Activated B cell treated with CpG ODN at 0.5 μM for 24 hours (primary cell): ENCODE measurements at regions of chr17 and their contacts with region 1.

Region 1: DNA sequence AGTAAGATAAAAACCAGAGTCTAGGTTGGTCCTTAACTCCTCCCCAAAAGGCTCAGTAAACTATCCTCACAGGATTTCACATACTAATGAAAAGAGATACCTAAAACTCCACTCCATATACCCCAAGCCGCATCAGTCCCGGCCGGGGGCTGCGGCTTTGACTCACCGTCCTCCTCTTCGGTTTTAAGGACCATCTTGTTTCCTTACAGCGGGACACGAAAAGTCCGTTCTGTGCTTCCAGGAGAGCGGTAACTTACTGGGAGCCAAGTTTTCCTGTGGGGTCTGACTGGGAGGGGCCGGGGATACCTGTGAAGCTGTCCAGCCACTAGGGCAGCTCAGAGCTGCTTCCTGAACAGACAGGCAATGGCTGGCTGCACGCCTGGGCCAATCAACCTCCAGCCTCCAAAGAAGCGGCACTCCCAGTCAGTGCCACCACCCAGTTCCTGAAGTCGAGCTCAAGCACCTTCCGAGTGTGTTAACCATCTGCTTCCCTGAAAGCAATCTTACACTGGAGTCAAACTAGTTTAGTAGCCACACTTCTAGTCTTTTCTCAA is 45.5 kb downstream of the CYTH1 start:
- DNase-seq: peak; percentile 57
- ATAC-seq: peak; percentile 51
- H3K4me3 Mint-ChIP-seq: peak overlapping the region; percentile 92
- H3K27ac Mint-ChIP-seq: peak overlapping the region; percentile 90
- H3K4me1 Mint-ChIP-seq: peaks cover 81% of the 10 kb centered on the region
- H3K27me3 Mint-ChIP-seq: no peaks in the 10 kb centered on the region
- CTCF ChIP-seq: no peak

Region 2: GRCh38 chr17:78716814-78717393 is 19.7 kb before region 1 on chr17:
- CTCF ChIA-PET with region 1: interaction called, 52 read pairs
- POLR2A ChIA-PET with region 1: interaction called, 396 read pairs
- intact Hi-C with region 1: loop called (anchors 1 kb)
- DNase-seq: no peak
- ATAC-seq: peak; percentile 28
- H3K4me3 Mint-ChIP-seq: peak overlapping the region; percentile 65
- H3K27ac Mint-ChIP-seq: peak overlapping the region; percentile 78
- H3K4me1 Mint-ChIP-seq: peaks cover 95% of the 10 kb centered on the region
- H3K27me3 Mint-ChIP-seq: no peaks in the 10 kb centered on the region
- CTCF ChIP-seq: no peak

Region 3: DNA sequence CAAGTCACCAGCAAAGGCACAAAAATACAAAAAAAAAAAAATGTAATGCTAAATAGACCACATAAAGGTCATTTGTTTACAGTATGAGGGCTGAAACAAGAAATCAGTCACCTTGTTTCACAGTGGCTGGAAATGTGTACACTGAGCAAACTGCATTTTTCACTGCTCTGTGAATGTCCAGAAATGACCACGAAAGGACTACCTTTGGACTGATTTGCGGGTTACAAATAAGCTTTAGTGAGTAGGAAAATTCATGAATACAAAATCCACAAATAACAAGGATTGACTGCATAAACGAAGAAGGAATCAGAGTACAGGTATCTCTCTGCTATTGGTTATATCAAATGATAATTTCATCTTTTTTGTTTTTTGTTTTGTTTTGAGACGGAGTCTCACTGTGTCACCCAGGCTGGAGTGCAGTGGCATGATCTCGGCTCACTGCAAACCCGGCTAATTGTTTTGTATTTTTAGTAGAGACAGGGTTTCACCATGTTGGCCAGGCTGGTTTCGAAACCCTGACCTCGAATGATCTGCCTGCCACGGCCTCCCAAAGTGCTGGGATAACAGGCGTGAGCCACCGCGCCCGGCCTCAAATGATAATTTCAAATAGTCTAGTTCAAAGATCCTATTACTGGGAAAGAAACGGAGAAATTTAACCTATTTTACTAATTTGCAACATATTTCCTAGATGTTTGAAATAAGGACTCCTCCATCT is 15.0 kb after region 1 on chr17:
- CTCF ChIA-PET with region 1: interaction called, 11 read pairs
- POLR2A ChIA-PET with region 1: interaction called, 72 read pairs
- intact Hi-C with region 1: loop called (anchors 2 kb)
- DNase-seq: no peak
- ATAC-seq: no peak
- H3K4me3 Mint-ChIP-seq: no peak overlapping the region
- H3K27ac Mint-ChIP-seq: peak overlapping the region; percentile 56
- H3K4me1 Mint-ChIP-seq: peaks cover 91% of the 10 kb centered on the region
- H3K27me3 Mint-ChIP-seq: no peaks in the 10 kb centered on the region
- CTCF ChIP-seq: no peak

Region 4: GRCh38 chr17:78769196-78769773 is 32.7 kb after region 1 on chr17:
- CTCF ChIA-PET with region 1: no interaction called
- POLR2A ChIA-PET with region 1: interaction called, 49 read pairs
- intact Hi-C with region 1: no loop called
- DNase-seq: no peak
- ATAC-seq: no peak
- H3K4me3 Mint-ChIP-seq: no peak overlapping the region
- H3K27ac Mint-ChIP-seq: no peak overlapping the region
- H3K4me1 Mint-ChIP-seq: peaks cover 47% of the 10 kb centered on the region
- H3K27me3 Mint-ChIP-seq: no peaks in the 10 kb centered on the region
- CTCF ChIP-seq: no peak

Region 5: GRCh38 chr17:78781948-78782916 is 45.6 kb after region 1 on chr17 and contains the start of gene CYTH1:
- CTCF ChIA-PET with region 1: interaction called, 3 read pairs
- POLR2A ChIA-PET with region 1: interaction called, 65 read pairs
- intact Hi-C with region 1: loop called (anchors 1 kb)
- DNase-seq: peak; percentile 98
- ATAC-seq: peak; percentile 80
- H3K4me3 Mint-ChIP-seq: peak within 1 kb of the TSS; percentile 92
- H3K27ac Mint-ChIP-seq: peak within 1 kb of the TSS; percentile 93
- H3K4me1 Mint-ChIP-seq: peaks cover 40% of the 10 kb centered on the region
- H3K27me3 Mint-ChIP-seq: no peaks in the 10 kb centered on the region
- CTCF ChIP-seq: no peak
- total RNA-seq, gene CYTH1: 368 and 391 TPM in 2 replicates